ENCODE measurements at regions of chr6 and their contacts with region 1.

Region 1: GRCh38 chr6:110815217-110816109 is at the start of gene CDK19:
- DNase-seq: peak; percentile 97 to 100 (median 98)
- ATAC-seq: peak; percentile 82
- H3K4me3 ChIP-seq: peak within 1 kb of the TSS; percentile 88
- H3K4me3 Mint-ChIP-seq: peak within 1 kb of the TSS; percentile 99
- H3K27ac ChIP-seq: peak within 1 kb of the TSS; percentile 82 to 93
- H3K27ac Mint-ChIP-seq: peak within 1 kb of the TSS; percentile 99
- H3K4me1 ChIP-seq: peaks cover 16% of the 10 kb centered on the region
- H3K4me1 Mint-ChIP-seq: peaks cover 33% of the 10 kb centered on the region
- H3K27me3 ChIP-seq: no peaks in the 10 kb centered on the region
- H3K27me3 Mint-ChIP-seq: no peaks in the 10 kb centered on the region
- CTCF ChIP-seq: no peak
- total RNA-seq, gene CDK19: 6.4 to 8.3 TPM

Region 2: GRCh38 chr6:110179401-110180227 is 635.8 kb before region 1 on chr6 and contains the start of gene WASF1:
- CTCF ChIA-PET with region 1: no interaction called
- POLR2A ChIA-PET with region 1: interaction called, 3 read pairs
- intact Hi-C with region 1: loop called in 1 of 2 experiments (anchors 5 kb)
- DNase-seq: peak; percentile 78 to 96 (median 86)
- ATAC-seq: peak; percentile 89
- H3K4me3 ChIP-seq: peak within 1 kb of the TSS; percentile 95
- H3K4me3 Mint-ChIP-seq: peak within 1 kb of the TSS; percentile 84
- H3K27ac ChIP-seq: peak within 1 kb of the TSS; percentile 74 to 78
- H3K27ac Mint-ChIP-seq: peak within 1 kb of the TSS; percentile 16
- H3K4me1 ChIP-seq: peaks cover 28% of the 10 kb centered on the region
- H3K4me1 Mint-ChIP-seq: peaks cover 12% of the 10 kb centered on the region
- H3K27me3 ChIP-seq: peaks cover 0 to 9% of the 10 kb centered on the region in 2 experiments
- H3K27me3 Mint-ChIP-seq: peaks cover 10% of the 10 kb centered on the region
- CTCF ChIP-seq: no peak
- total RNA-seq, gene WASF1: 0.19 to 0.22 TPM

Region 3: DNA sequence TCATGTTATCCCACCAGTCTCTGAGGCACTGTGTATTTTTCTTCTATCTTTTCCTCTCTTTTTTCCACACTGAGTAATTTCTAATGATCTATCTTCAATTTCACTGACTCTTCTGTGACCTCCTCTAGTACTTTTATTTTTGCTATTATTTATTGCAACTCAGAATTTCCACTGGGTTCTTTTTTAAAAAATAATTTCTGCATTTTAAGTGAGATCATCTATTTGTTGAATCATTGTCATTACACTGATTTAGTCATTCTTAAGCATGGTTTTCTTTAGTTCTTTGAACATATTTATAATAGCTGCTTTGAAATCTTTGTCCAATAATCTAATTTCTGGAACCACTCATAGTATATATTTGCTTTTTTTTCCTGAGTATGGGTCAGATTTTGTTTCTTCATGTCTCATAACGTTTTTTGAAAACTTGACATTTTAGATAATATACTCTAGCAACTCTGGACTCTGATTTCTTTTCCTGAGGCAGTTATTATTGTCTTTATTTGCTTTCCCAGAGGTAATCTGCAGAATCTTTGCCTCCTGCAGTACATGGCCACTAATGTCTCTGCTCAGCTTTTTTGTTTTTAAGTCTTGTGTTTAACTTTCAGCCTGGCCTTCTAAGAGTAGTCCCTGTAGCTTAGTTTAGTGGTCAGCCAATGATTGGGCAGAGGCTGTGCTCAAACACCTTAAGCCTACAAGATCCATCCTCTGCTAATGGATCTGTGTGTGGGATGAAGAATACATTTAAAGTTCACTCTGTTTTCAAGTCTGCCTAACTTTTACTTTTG is 242.1 kb before region 1 on chr6:
- CTCF ChIA-PET with region 1: no interaction called
- POLR2A ChIA-PET with region 1: no interaction called
- intact Hi-C with region 1: no loop called
- DNase-seq: no peak
- ATAC-seq: no peak
- H3K4me3 ChIP-seq: no peak overlapping the region
- H3K4me3 Mint-ChIP-seq: no peak overlapping the region
- H3K27ac ChIP-seq: no peak overlapping the region
- H3K27ac Mint-ChIP-seq: no peak overlapping the region
- H3K4me1 ChIP-seq: peaks cover 8% of the 10 kb centered on the region
- H3K4me1 Mint-ChIP-seq: no peaks in the 10 kb centered on the region
- H3K27me3 ChIP-seq: no peaks in the 10 kb centered on the region
- H3K27me3 Mint-ChIP-seq: no peaks in the 10 kb centered on the region
- CTCF ChIP-seq: no peak

Region 4: GRCh38 chr6:110864824-110865223 is 49.4 kb after region 1 on chr6:
- CTCF ChIA-PET with region 1: interaction called, 3 read pairs
- POLR2A ChIA-PET with region 1: interaction called, 14 read pairs
- intact Hi-C with region 1: no loop called
- DNase-seq: no peak
- ATAC-seq: no peak
- H3K4me3 ChIP-seq: no peak overlapping the region
- H3K4me3 Mint-ChIP-seq: no peak overlapping the region
- H3K27ac ChIP-seq: no peak overlapping the region
- H3K27ac Mint-ChIP-seq: no peak overlapping the region
- H3K4me1 ChIP-seq: peaks cover 14% of the 10 kb centered on the region
- H3K4me1 Mint-ChIP-seq: peaks cover 5% of the 10 kb centered on the region
- H3K27me3 ChIP-seq: no peaks in the 10 kb centered on the region
- H3K27me3 Mint-ChIP-seq: no peaks in the 10 kb centered on the region
- CTCF ChIP-seq: no peak

Region 5: DNA sequence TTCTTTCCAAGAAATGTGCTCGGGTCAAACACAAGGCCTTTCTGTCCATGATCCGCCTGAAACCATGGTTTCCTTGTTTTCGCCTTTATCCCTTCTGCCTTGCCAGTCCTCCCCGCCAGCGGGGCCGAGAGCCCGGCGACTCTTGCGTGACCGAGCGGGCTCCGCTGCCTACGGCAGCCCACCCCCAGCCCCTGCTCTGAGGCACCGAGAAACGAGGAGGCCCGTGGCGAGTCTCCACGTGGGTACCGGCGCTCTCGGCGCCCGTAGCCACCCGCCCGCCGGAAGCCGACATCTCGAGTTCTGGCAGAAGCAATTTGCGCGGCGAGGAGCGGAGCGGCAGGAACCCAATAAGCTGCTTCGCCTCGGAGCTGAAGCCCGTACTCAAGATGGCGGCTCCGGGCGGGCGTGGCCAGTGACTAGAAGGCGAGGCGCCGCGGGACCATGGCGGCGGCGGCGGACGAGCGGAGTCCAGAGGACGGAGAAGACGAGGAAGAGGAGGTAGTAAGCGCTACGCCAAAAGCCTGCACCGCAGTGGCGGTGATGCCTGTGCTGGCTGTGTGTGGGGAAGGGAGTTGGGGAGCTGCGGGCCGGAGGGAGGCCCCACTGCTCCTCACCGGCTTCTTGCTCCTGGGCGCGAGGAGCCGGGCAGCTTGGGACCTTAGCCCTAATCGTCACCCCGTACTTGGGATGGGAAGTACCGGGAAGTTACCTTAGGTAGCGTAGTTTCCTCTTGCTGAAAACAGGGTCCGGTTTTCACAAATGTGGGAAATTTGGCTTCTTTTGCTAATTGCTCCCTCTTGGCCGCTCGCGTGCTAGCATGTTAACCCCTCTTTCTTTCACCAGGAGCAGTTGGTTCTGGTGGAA is 143.1 kb after region 1 on chr6 and contains the start of gene GTF3C6:
- CTCF ChIA-PET with region 1: interaction called, 5 read pairs
- POLR2A ChIA-PET with region 1: interaction called, 74 read pairs
- intact Hi-C with region 1: loop called (anchors 1 to 5 kb)
- DNase-seq: peak; percentile 85 to 96 (median 90)
- ATAC-seq: peak; percentile 99
- H3K4me3 ChIP-seq: peak within 1 kb of the TSS; percentile 99
- H3K4me3 Mint-ChIP-seq: peak within 1 kb of the TSS; percentile 99
- H3K27ac ChIP-seq: peak within 1 kb of the TSS; percentile 84 to 90
- H3K27ac Mint-ChIP-seq: peak within 1 kb of the TSS; percentile 89
- H3K4me1 ChIP-seq: peaks cover 17% of the 10 kb centered on the region
- H3K4me1 Mint-ChIP-seq: peaks cover 25% of the 10 kb centered on the region
- H3K27me3 ChIP-seq: no peaks in the 10 kb centered on the region
- H3K27me3 Mint-ChIP-seq: peaks cover 2% of the 10 kb centered on the region
- CTCF ChIP-seq: no peak
- total RNA-seq, gene GTF3C6: 17.9 to 19.2 TPM

Region 6: DNA sequence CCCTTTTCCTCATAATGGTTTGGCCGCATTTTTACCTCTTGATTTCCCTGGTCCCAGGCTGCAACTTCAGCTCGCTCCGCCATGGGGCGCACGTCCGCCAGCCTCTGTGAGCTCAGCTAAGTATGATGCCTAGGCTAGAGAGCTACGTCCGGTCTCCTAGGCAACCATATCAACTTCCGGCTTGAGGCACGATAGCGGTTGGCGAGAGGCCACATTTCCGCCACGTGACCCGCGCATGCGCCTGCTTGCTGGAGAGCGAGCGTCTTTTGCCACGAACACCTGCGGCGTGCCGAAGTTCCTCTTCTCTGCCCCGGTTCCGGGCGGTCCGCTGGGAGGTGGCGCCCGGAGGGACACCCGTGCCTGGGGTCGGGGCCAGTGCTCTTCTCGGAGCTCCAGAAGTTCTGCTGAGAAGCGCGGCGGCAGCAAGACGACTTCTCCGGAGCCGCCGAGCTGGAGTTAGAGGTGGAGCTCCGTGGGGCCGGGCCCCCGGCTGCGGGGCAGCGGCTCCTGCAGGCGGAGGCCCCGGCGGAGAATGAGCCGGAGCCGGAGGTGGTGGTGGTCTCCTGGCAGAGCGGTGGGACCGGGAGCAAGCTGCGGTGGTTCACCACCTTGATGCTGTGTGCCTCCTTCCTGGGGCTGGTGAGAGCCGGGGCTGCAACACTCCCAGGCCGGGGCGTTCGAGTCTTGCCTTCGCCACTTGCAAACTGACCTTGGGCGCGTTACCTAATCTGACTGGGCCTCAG is 443.8 kb after region 1 on chr6:
- CTCF ChIA-PET with region 1: no interaction called
- POLR2A ChIA-PET with region 1: interaction called, 7 read pairs
- intact Hi-C with region 1: loop called in 1 of 2 experiments (anchors 5 kb)
- DNase-seq: peak; percentile 98 to 100 (median 99)
- ATAC-seq: peak; percentile 95
- H3K4me3 ChIP-seq: peak overlapping the region; percentile 60
- H3K4me3 Mint-ChIP-seq: peak overlapping the region; percentile 90
- H3K27ac ChIP-seq: peak overlapping the region; percentile 78 to 89
- H3K27ac Mint-ChIP-seq: peak overlapping the region; percentile 87
- H3K4me1 ChIP-seq: peaks cover 28% of the 10 kb centered on the region
- H3K4me1 Mint-ChIP-seq: peaks cover 35% of the 10 kb centered on the region
- H3K27me3 ChIP-seq: no peaks in the 10 kb centered on the region
- H3K27me3 Mint-ChIP-seq: no peaks in the 10 kb centered on the region
- CTCF ChIP-seq: peak; percentile 96

Region 7: GRCh38 chr6:111938716-111939115 is 1123.3 kb after region 1 on chr6:
- CTCF ChIA-PET with region 1: no interaction called
- POLR2A ChIA-PET with region 1: no interaction called
- intact Hi-C with region 1: no loop called
- DNase-seq: no peak
- ATAC-seq: no peak
- H3K4me3 ChIP-seq: no peak overlapping the region
- H3K4me3 Mint-ChIP-seq: no peak overlapping the region
- H3K27ac ChIP-seq: no peak overlapping the region
- H3K27ac Mint-ChIP-seq: no peak overlapping the region
- H3K4me1 ChIP-seq: no peaks in the 10 kb centered on the region
- H3K4me1 Mint-ChIP-seq: no peaks in the 10 kb centered on the region
- H3K27me3 ChIP-seq: no peaks in the 10 kb centered on the region
- H3K27me3 Mint-ChIP-seq: no peaks in the 10 kb centered on the region
- CTCF ChIP-seq: no peak